Caco-2 (cell line): ENCODE measurements at regions of chr1 and their contacts with region 1.

Region 1: DNA sequence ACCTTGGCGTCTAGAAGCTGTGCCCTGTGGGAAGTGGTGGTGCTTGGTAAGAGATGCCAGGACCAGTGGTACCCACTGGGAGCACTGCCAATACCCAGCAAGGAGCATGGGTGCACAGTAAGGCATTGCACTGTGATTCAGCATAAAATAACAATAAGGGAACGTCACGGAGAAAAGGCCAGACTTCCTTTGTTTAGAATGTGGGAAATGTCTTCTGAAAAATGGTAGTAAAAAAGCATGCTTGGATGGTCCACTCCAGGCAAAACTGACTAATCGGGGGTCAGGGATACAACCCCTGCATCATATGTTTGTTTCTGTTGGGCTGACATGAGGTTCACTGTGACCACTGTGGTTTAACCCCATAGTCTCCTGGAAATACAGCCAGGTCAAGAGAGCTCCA is 14.7 kb downstream of the METTL18 start:
- DNase-seq: no peak
- H3K4me3 ChIP-seq: no peak overlapping the region
- H3K4me3 Mint-ChIP-seq: no peak overlapping the region
- H3K27ac Mint-ChIP-seq: no peak overlapping the region
- H3K4me1 ChIP-seq: peaks cover 28% of the 10 kb centered on the region
- H3K4me1 Mint-ChIP-seq: peaks cover 15% of the 10 kb centered on the region
- H3K27me3 ChIP-seq: no peaks in the 10 kb centered on the region
- H3K27me3 Mint-ChIP-seq: no peaks in the 10 kb centered on the region
- CTCF ChIP-seq: no peak

Region 2: DNA sequence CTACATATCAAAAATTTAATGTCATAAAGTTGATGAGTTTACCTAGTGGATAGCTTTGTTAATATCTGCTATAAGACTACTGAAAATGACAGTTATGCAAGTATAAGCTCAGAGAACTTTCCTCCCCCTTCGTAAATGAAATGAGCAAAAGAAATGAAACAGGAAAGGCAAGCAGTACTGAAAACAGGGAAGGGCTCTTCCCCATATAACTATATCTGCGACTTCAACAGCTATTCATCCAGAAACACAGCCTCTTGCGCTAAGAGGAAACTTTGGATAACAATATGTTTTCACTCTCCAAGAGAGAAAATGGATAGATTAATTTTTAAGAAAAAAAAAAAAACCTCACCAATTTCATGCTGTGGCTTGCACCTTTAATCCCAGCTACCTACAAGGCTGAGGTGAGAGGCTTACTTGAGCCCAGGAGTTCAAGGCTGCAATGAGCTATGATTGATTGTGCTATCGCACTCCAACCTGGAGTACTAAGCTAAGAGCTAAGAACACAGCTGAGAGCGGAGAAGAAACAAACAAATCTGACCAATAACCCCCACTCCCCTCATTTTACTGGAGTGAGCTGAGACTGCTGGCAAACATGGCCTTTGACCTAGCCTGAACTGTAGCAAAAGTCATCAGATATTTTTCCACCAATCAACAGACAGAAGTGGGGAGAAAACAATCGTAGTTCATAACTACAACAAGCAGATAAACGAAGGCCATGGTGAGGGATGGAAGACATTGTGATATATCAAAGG is 14.2 kb before region 1 on chr1:
- CTCF ChIA-PET with region 1: no interaction called
- POLR2A ChIA-PET with region 1: no interaction called
- intact Hi-C with region 1: loop called (anchors 2 kb)
- DNase-seq: peak; percentile 63 to 65
- H3K4me3 ChIP-seq: no peak overlapping the region
- H3K4me3 Mint-ChIP-seq: peak overlapping the region; percentile 61
- H3K27ac Mint-ChIP-seq: peak overlapping the region; percentile 40
- H3K4me1 ChIP-seq: peaks cover 23% of the 10 kb centered on the region
- H3K4me1 Mint-ChIP-seq: peaks cover 25% of the 10 kb centered on the region
- H3K27me3 ChIP-seq: no peaks in the 10 kb centered on the region
- H3K27me3 Mint-ChIP-seq: no peaks in the 10 kb centered on the region
- CTCF ChIP-seq: no peak

Region 3: GRCh38 chr1:169794530-169795416 is 14.8 kb after region 1 on chr1 and contains the start of gene METTL18:
- CTCF ChIA-PET with region 1: no interaction called
- POLR2A ChIA-PET with region 1: no interaction called
- intact Hi-C with region 1: loop called (anchors 1 kb)
- DNase-seq: peak; percentile 93 to 96
- H3K4me3 ChIP-seq: peak within 1 kb of the TSS; percentile 74
- H3K4me3 Mint-ChIP-seq: peak within 1 kb of the TSS; percentile 100
- H3K27ac Mint-ChIP-seq: peak within 1 kb of the TSS; percentile 99
- H3K4me1 ChIP-seq: peaks cover 6% of the 10 kb centered on the region
- H3K4me1 Mint-ChIP-seq: peaks cover 6% of the 10 kb centered on the region
- H3K27me3 ChIP-seq: no peaks in the 10 kb centered on the region
- H3K27me3 Mint-ChIP-seq: no peaks in the 10 kb centered on the region
- CTCF ChIP-seq: no peak
- total RNA-seq, gene METTL18: 6.9 and 7.9 TPM in 2 replicates

Region 4: DNA sequence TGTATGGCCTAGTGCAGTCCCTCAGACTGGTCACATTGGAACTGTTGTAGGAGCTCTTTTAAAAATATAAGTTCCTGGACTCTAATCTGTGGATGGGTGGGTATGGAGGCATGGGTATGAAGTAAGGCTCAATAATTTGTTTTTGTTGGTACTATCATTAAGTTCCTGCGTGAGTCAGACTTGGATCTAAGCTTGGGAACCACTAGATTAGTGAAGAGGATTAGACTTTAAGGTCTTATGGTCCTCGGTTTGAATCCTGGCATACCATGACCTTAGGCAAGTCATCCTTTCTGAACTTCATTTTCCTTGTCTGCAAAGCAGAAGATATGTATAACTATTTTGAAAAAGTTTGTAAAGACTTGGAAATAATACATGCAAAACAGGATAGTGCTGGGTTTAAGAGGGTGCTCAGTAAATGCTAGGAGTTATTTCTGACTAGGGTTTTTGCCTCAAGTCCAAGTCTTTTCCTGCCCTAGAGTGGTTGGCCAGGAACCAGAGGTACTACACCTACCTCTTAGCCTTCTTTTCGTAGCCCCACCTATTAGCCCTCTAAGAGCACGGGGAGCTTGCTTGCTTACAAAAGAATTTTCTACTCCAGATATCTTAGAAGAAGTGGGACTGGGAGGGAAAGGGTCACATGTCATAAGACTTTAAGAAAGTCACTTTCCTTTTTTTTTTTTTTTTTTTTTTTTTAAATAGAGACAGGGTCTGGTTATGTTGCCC is 53.4 kb after region 1 on chr1:
- CTCF ChIA-PET with region 1: no interaction called
- POLR2A ChIA-PET with region 1: no interaction called
- intact Hi-C with region 1: no loop called
- DNase-seq: no peak
- H3K4me3 ChIP-seq: no peak overlapping the region
- H3K4me3 Mint-ChIP-seq: no peak overlapping the region
- H3K27ac Mint-ChIP-seq: no peak overlapping the region
- H3K4me1 ChIP-seq: no peaks in the 10 kb centered on the region
- H3K4me1 Mint-ChIP-seq: no peaks in the 10 kb centered on the region
- H3K27me3 ChIP-seq: no peaks in the 10 kb centered on the region
- H3K27me3 Mint-ChIP-seq: no peaks in the 10 kb centered on the region
- CTCF ChIP-seq: no peak